ENCODE measurements at regions of chr1 and their contacts with region 1.

Region 1: DNA sequence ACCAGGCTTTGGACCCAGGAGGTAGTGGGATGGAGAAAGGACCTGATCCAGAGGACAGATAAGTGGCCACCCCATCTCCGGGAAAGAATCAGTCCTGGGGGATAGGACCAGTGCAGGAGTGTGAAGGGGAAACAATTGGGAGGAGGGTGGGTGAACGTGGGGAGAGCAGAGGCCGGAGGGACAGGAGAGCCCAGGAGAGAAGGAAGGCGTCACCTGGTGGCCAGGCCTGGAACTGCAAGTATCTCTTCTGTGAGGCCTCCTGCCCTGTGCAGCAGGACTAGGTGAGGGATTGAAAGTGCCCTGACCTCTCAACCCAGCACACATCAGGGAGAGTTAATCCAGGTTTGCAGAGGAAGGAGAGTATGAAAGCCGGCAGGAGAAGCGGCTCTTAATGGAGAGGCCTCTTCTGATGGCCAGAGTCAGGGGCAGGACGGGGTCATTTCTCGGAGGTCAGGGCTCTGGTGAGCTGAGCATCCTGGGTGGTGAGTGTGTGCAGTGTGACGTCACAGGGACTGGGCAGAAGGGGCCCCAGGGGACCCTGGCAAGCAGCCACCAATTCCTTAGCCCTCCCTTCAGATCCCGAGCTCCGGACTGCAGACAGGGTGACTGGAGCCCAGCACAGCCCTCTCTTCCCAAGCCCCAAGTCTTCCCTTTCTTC is 9.2 kb upstream of the LAD1 start:
- DNase-seq: peak; percentile 90
- H3K4me3 ChIP-seq: no peak overlapping the region
- H3K27ac ChIP-seq: peak overlapping the region in 1 of 4 donors; percentile 82
- H3K4me1 ChIP-seq: peaks cover 8 to 42% (median 29%) of the 10 kb centered on the region in 4 donors
- H3K27me3 ChIP-seq: no peaks in the 10 kb centered on the region
- CTCF ChIP-seq: peak; percentile 90 to 96 (median 95)
- EP300 ChIP-seq: no peak
- POLR2A ChIP-seq: no peak

Region 2: DNA sequence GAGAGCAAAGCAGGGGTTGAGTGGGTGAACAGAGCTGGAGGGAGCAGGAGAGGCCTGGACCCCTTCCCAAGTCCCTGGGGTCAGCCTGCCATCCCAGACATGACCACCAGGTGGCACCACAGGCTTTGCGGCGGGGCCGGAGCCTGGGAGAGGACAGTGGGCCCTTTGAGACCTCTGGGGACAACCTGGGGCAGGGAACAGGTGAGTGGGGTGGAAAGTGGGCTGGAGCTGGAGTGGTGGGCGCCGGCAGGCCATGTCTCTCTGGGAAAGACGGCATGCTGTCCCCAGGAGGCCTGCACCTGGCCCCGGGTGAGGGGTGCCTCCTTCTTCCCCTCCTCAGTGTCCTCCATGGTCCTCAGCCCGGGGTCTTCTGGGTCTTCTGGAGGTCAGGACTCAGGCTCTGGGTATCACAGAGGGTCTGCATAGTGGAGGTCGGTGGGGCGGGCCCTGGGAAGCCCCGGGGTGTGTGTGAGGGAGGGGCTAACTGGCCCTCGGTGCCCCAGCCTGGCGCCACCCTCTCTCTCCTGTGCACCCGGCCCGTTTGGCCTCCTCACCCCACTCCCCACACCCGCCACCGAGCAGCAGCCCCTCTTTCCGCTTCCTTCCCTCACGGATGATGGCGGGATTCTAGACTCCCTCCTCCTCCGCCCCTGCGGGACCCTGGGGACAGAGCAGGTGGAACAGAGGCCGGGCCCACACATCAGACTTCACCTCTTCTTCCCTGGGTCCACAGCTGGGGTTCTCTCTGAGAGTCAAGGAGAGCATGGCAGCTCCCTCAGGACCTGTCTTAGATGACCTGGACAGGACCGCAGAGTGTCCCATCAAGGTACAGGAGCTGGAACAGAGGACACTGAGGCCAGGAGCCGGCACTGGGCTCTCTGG is 153.4 kb before region 1 on chr1:
- in situ Hi-C with region 1: no loop called
- intact Hi-C with region 1: loop called (anchors 5 kb)
- DNase-seq: peak; percentile 69
- H3K4me3 ChIP-seq: no peak overlapping the region
- H3K27ac ChIP-seq: no peak overlapping the region
- H3K4me1 ChIP-seq: peaks cover 2 to 6% (median 5%) of the 10 kb centered on the region in 4 donors
- H3K27me3 ChIP-seq: peaks cover 11% of the 10 kb centered on the region
- CTCF ChIP-seq: peak; percentile 95 to 99 (median 98)
- EP300 ChIP-seq: no peak
- POLR2A ChIP-seq: no peak

Measured in transverse colon (tissue), 4 donors.